A549 (cell line): ENCODE measurements at regions of chr2 and their contacts with region 1.

Region 1: GRCh38 chr2:74529357-74530238 is at the starts of genes AUP1 and HTRA2:
- DNase-seq: peak; percentile 99 to 100
- ATAC-seq: peak; percentile 91 to 97
- H3K4me3 ChIP-seq: peak within 1 kb of the TSS; percentile 57
- H3K27ac ChIP-seq: peak within 1 kb of the TSS; percentile 93 to 96
- H3K4me1 ChIP-seq: peaks cover 17% of the 10 kb centered on the region
- CTCF ChIP-seq: no peak; the same call in 2 of the 3 replicates
- EP300 ChIP-seq: no peak
- POLR2A ChIP-seq: peak; percentile 86
- RAD21 ChIP-seq: peak in 1 of 2 experiments; percentile 20; a peak in 1 of 5 replicates
- polyA plus RNA-seq, gene AUP1: 129 and 181 TPM in 2 replicates
- polyA plus RNA-seq, gene HTRA2: 28.7 and 33.7 TPM in 2 replicates

Region 2: DNA sequence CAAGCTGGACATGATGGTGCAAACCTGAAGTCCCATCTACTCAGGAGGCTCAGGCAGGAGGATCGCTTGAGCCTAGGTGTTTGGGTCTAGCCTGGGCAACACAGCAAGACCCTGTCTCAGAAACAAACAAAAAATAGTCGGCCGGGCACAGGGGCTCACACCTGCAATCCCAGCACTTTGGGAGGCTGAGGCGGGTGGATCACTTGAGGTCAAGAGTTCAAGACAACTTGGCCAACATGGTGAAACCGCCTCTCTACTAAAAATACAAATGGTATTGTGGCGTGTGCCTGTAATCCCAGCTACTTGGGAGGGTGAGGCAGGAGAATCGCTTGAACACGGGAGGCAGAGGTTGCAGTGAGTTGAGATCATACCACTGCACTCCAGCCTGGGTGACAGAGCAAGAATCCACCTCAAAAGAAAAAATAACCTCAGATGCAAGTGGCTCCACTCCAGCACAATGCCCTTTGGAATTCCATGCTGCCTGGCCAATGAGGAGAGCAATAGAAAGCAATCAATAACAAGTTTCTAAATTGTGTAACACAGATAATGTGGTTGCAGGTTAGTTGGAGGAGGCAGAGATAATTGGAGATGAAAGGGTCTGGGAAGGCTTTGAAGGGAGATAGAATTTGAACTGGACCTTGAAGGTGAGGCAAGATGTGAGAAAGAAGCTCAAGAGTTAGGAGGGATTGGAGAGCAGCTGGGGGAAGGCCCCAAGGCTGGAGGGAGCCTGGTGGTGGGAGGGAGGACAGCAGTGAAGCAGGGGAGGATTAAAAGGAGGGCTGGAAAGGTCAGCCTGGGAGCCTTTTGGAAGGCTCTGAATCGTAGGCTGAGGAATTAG is 40.7 kb before region 1 on chr2:
- CTCF ChIA-PET with region 1: interaction called, 72 read pairs
- POLR2A ChIA-PET with region 1: interaction called, 5 read pairs
- DNase-seq: no peak
- ATAC-seq: peak; percentile 56 to 59; a peak in 5 of 6 replicates
- H3K4me3 ChIP-seq: no peak overlapping the region
- H3K27ac ChIP-seq: no peak overlapping the region
- H3K4me1 ChIP-seq: peaks cover 4% of the 10 kb centered on the region; the same call in 2 of the 3 replicates
- CTCF ChIP-seq: no peak
- EP300 ChIP-seq: no peak
- POLR2A ChIP-seq: no peak
- RAD21 ChIP-seq: no peak

Region 3: GRCh38 chr2:74507145-74507925 is 22.3 kb before region 1 on chr2 and contains the start of gene PCGF1:
- CTCF ChIA-PET with region 1: interaction called, 39 read pairs
- POLR2A ChIA-PET with region 1: interaction called, 6 read pairs
- DNase-seq: peak; percentile 97 to 99
- ATAC-seq: peak; percentile 81 to 91
- H3K4me3 ChIP-seq: peak within 1 kb of the TSS; percentile 78
- H3K27ac ChIP-seq: peak within 1 kb of the TSS; percentile 95 to 99
- H3K4me1 ChIP-seq: peaks cover 28% of the 10 kb centered on the region
- CTCF ChIP-seq: peak; percentile 47; the same call in 2 of the 3 replicates
- EP300 ChIP-seq: no peak
- POLR2A ChIP-seq: peak; percentile 77
- RAD21 ChIP-seq: peak in 1 of 2 experiments; percentile 40; a peak in 2 of 5 replicates
- polyA plus RNA-seq, gene PCGF1: 53.6 and 55.3 TPM in 2 replicates

Region 4: DNA sequence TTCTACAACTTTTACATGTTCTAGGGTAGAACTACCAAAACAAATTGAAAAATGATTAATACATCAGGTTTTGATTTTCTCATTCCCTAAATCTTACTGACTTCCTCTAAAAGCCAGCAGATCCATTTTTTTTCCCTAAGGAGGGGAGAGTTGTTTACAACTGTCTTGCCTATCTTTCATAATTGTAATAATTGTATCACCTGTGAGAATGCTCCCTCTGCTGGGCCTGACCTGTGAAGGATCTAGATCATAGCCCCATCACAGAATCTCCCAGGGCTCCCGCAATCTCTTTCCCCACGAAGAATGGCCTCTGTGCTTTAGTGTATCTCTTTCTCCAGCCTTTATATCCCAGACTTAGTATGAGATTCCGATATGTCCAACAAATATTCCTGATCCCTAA is 15.0 kb after region 1 on chr2:
- CTCF ChIA-PET with region 1: interaction called, 45 read pairs
- POLR2A ChIA-PET with region 1: no interaction called
- DNase-seq: peak in 1 of 2 experiments; percentile 44
- ATAC-seq: peak in 1 of 2 experiments; percentile 35; a peak in 2 of 6 replicates
- H3K4me3 ChIP-seq: no peak overlapping the region
- H3K27ac ChIP-seq: no peak overlapping the region
- H3K4me1 ChIP-seq: peaks cover 9% of the 10 kb centered on the region
- CTCF ChIP-seq: peak; percentile 36
- EP300 ChIP-seq: no peak
- POLR2A ChIP-seq: no peak
- RAD21 ChIP-seq: peak in 1 of 2 experiments; percentile 24; a peak in 1 of 5 replicates